Right cardiac atrium (tissue), 5 donors: ENCODE measurements at regions of chr17 and their contacts with region 1.

Region 1: GRCh38 chr17:64073771-64074703 is 53.6 kb upstream of the ICAM2 start:
- DNase-seq: no peak
- ATAC-seq: peak; percentile 12 to 31
- H3K4me3 ChIP-seq: no peak overlapping the region
- H3K27ac ChIP-seq: no peak overlapping the region
- H3K4me1 ChIP-seq: peaks cover 1% of the 10 kb centered on the region
- H3K27me3 ChIP-seq: no peaks in the 10 kb centered on the region

Region 2: DNA sequence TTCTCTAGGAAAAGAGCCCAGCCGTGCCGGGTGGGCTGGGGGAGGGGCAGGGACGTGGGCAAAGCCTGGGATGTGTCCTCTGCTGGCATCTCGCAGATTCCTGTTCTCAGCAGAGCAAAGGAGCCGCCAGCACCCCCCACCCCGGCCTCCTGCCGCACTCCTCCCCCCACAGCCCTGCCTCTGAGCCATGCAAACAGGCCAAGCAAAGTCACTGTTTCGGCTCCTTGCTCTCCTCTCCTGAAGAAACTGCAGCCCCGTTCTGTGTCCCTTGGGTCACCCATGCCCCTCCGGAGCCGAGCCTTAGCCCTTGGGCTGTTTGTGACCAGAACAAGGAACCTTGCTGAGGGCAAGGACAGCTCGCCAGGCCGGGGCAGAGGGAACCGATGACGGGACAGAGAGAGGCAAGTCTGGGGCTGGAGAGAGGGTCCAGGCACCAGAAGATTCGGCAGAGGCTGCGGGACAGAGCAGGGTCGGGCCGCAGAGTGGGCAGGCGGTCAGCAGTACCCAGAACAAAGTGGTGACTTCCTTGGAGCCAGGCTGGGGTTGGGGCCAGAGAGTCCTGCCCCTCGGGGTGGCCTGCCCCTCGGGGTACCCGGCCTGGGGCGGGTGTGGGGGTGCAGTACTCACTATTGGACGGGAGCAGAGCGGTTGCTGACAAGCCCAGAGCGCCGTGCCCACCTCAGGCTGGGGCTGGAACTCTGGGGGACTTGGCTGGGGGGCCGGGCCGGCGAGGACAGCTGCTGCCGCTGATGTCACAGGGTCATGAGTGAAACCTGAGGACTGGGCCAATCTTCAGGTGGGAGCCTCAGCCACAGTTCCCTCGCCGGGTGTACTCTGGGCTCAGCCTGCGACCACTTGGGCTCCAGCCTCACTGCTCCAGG is 85.1 kb before region 1 on chr17:
- intact Hi-C with region 1: no loop called
- DNase-seq: peak in 2 of 3 donors; percentile 69 to 74
- ATAC-seq: peak in 1 of 2 donors; percentile 8
- H3K4me3 ChIP-seq: no peak overlapping the region
- H3K27ac ChIP-seq: no peak overlapping the region
- H3K4me1 ChIP-seq: peaks cover 3% of the 10 kb centered on the region
- H3K27me3 ChIP-seq: no peaks in the 10 kb centered on the region

Region 3: GRCh38 chr17:64051153-64051552 is 22.9 kb before region 1 on chr17:
- intact Hi-C with region 1: loop called in 1 of 4 experiments (anchors 2 kb)
- DNase-seq: no peak
- ATAC-seq: no peak
- H3K4me3 ChIP-seq: no peak overlapping the region
- H3K27ac ChIP-seq: no peak overlapping the region
- H3K4me1 ChIP-seq: no peaks in the 10 kb centered on the region
- H3K27me3 ChIP-seq: no peaks in the 10 kb centered on the region